ENCODE measurements at regions of chr4 and their contacts with region 1.

Region 1: DNA sequence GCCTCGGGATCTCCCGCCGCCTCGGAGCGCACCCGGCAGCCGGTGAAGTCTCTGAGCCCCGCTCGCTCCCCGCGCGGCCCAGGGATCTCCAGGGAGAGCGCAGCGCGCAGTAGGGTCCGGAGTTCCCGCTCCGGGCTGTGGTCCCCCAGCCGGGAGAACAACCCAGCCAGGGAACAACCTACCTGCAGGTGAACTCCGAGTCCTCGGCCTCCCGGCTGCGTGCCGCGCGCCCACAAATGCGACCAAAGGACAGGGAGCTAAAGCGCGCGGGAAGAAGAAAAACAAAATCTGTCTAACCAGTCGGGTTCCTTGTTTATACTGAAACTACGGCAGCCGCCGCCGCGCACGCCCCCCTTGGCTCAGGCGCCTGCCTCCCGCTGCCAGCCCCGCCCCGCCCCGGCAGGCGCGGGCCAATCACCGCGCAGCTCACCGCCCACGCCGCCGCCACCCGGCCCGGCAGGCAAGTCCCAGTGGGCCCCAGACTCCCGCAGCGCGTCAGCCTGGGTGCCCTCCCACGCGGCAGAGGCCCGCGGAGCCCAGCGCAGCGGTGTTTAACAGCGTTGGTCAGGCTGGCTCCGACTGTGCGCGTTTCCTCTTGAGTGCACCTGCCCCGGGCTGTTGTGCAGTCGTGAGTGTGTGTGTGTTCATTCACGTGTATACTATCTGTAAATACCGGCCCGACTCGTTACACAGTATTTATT is at the start of gene RASGEF1B:
- DNase-seq: peak; percentile 97
- ATAC-seq: peak; percentile 93
- H3K4me3 Mint-ChIP-seq: peak within 1 kb of the TSS; percentile 86
- H3K27ac Mint-ChIP-seq: peak within 1 kb of the TSS; percentile 88
- H3K4me1 Mint-ChIP-seq: peaks cover 38% of the 10 kb centered on the region
- H3K27me3 Mint-ChIP-seq: no peaks in the 10 kb centered on the region
- total RNA-seq, gene RASGEF1B: 3.4 to 4.0 TPM

Region 2: DNA sequence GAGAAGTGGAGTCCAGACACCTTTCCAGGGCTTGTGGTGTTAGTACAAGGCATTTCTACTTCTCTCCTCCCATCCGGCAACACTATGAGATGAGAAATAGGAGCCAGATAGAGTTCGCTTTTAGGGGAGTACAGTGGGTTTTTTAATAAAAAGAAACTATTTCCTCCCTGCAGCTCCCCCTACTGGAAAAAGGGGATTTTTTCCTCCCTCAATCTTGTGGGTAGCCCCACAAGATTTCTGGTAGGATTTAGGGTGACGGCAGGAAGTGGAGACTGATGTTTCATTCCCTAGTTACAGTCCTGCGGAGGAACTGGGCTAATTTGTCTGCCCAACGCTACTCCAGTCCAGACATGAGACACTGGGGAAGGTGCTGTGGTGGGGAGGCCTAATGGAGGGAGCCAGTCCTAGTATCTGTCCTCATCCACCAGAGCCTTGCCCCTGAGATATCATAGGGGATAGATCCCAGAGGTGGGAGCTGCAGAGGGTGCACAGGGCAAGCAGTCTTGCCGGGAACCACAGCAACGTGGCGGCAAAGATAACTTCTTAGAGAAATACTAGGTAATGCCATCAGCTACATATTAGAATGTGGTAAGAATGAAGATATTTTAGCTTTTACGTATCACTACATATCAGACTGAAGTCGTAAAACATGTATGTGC is 211.2 kb before region 1 on chr4:
- CTCF ChIA-PET with region 1: no interaction called
- POLR2A ChIA-PET with region 1: no interaction called
- intact Hi-C with region 1: no loop called
- DNase-seq: no peak
- ATAC-seq: no peak
- H3K4me3 Mint-ChIP-seq: no peak overlapping the region
- H3K27ac Mint-ChIP-seq: no peak overlapping the region
- H3K4me1 Mint-ChIP-seq: no peaks in the 10 kb centered on the region
- H3K27me3 Mint-ChIP-seq: peaks cover 8% of the 10 kb centered on the region

Region 3: DNA sequence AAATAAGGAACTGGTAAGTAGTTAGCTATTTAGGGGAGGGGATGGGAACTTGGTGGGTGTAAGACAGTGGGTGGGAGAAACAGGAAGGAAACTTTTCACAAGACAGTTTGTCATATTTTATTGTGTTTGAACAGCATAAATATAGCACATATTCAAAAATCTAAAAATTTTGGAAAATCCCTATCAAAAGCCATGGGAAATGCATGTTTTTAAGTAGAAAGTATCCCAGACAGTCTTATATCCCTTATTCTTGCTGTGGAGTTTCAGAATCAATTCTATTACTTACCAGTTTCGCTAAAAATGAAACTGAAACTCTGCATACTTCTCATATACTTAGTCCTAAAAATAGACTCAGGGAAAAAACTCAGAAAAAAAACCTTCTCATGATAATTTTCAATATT is 22.3 kb after region 1 on chr4:
- CTCF ChIA-PET with region 1: interaction called, 3 read pairs
- POLR2A ChIA-PET with region 1: interaction called, 3 read pairs
- intact Hi-C with region 1: loop called (anchors 1 kb)
- DNase-seq: no peak
- ATAC-seq: peak; percentile 59
- H3K4me3 Mint-ChIP-seq: peak overlapping the region; percentile 28
- H3K27ac Mint-ChIP-seq: peak overlapping the region; percentile 55
- H3K4me1 Mint-ChIP-seq: peaks cover 50% of the 10 kb centered on the region
- H3K27me3 Mint-ChIP-seq: no peaks in the 10 kb centered on the region

Region 4: DNA sequence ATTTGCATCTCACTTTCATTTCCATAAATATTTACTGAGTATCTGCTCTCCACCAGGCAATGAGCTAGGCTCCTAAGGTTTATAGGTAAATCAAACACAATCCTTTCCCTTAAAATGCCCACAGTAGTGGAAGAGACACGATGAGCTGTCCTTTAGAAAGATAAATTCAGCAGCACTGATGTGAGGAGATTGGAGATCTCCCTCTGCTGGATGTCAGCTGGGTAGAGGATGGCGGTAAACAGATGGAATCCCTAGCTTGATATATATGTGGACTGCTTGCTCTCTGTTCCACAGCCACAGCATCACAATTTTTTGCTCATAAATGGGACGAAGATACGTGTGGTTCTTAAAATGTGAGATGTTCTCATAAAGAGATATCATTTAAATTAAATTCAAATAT is 216.3 kb after region 1 on chr4:
- CTCF ChIA-PET with region 1: interaction called, 14 read pairs
- POLR2A ChIA-PET with region 1: no interaction called
- intact Hi-C with region 1: loop called in 1 of 2 experiments (anchors 1 kb)
- DNase-seq: no peak
- ATAC-seq: no peak
- H3K4me3 Mint-ChIP-seq: no peak overlapping the region
- H3K27ac Mint-ChIP-seq: no peak overlapping the region
- H3K4me1 Mint-ChIP-seq: no peaks in the 10 kb centered on the region
- H3K27me3 Mint-ChIP-seq: no peaks in the 10 kb centered on the region

Region 5: GRCh38 chr4:81844717-81845116 is 373.0 kb after region 1 on chr4:
- CTCF ChIA-PET with region 1: interaction called, 47 read pairs
- POLR2A ChIA-PET with region 1: interaction called, 6 read pairs
- intact Hi-C with region 1: loop called (anchors 1 kb)
- DNase-seq: peak; percentile 77
- ATAC-seq: peak; percentile 92
- H3K4me3 Mint-ChIP-seq: no peak overlapping the region
- H3K27ac Mint-ChIP-seq: no peak overlapping the region
- H3K4me1 Mint-ChIP-seq: peaks cover 7% of the 10 kb centered on the region
- H3K27me3 Mint-ChIP-seq: no peaks in the 10 kb centered on the region

Region 6: GRCh38 chr4:82201805-82202641 is 730.3 kb after region 1 on chr4:
- CTCF ChIA-PET with region 1: interaction called, 10 read pairs
- POLR2A ChIA-PET with region 1: no interaction called
- intact Hi-C with region 1: loop called (anchors 1 to 2 kb)
- DNase-seq: peak; percentile 72
- ATAC-seq: peak; percentile 57
- H3K4me3 Mint-ChIP-seq: no peak overlapping the region
- H3K27ac Mint-ChIP-seq: no peak overlapping the region
- H3K4me1 Mint-ChIP-seq: peaks cover 3% of the 10 kb centered on the region
- H3K27me3 Mint-ChIP-seq: peaks cover 2% of the 10 kb centered on the region

Region 7: GRCh38 chr4:82373816-82374625 is 902.3 kb after region 1 on chr4 and contains the start of gene HNRNPD:
- CTCF ChIA-PET with region 1: no interaction called
- POLR2A ChIA-PET with region 1: no interaction called
- intact Hi-C with region 1: loop called in 1 of 2 experiments (anchors 5 kb)
- DNase-seq: peak; percentile 97
- ATAC-seq: peak; percentile 90
- H3K4me3 Mint-ChIP-seq: peak within 1 kb of the TSS; percentile 89
- H3K27ac Mint-ChIP-seq: peak within 1 kb of the TSS; percentile 99
- H3K4me1 Mint-ChIP-seq: peaks cover 34% of the 10 kb centered on the region
- H3K27me3 Mint-ChIP-seq: no peaks in the 10 kb centered on the region
- total RNA-seq, gene HNRNPD: 505 to 510 TPM